Aorta (tissue), 5 donors: ENCODE measurements at regions of chr12 and their contacts with region 1.

Region 1: GRCh38 chr12:56189176-56189917 is at the start of gene SMARCC2:
- DNase-seq: peak; percentile 94 to 96
- ATAC-seq: peak; percentile 94
- H3K4me3 ChIP-seq: peak within 1 kb of the TSS; percentile 54 to 94
- H3K27ac ChIP-seq: peak within 1 kb of the TSS; percentile 62 to 99
- H3K4me1 ChIP-seq: no peaks in the 10 kb centered on the region
- H3K27me3 ChIP-seq: no peaks in the 10 kb centered on the region
- total RNA-seq, gene SMARCC2: 118 to 140 TPM

Region 2: DNA sequence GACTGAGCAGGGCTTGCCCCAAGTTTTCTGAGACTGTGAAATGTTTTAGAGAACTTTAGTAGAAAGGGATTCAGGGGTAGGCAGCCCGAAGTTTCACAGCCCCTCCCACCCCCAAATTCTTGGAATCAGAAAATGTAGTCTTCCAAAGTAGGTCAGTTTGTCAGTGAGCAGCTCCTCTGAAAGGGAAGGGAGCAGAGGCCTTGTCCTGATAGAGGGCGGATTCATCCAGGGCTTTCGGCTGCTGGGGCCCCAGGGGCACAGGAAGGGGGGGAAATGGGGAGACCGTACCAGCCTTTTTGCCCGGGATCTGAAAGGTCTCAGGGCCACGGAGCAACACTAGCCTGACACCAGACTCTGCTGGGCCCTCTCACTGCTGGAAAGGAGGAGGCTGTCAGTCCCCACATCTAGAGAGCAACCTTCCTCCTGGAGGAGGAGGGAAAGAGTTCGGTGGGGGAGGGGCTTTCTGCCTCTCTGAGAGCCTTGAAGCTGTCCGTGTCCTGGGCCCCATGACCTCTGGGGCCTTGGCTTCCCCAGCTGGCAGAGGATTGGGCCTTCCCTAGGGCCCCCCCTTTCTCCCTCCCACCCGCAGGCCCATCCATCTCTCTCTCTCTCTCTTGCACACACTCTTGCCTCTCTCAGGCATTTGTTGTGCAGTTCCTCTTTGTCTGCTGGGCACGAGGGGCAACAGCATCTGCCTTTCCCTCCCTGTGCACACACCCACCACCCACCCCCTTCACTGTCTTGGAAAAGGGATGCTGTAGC is 168.7 kb before region 1 on chr12 and contains the start of gene IKZF4:
- intact Hi-C with region 1: no loop called
- DNase-seq: peak in 1 of 2 donors; percentile 72
- ATAC-seq: peak; percentile 73
- H3K4me3 ChIP-seq: no peak within 1 kb of the TSS
- H3K27ac ChIP-seq: no peak within 1 kb of the TSS
- H3K4me1 ChIP-seq: no peaks in the 10 kb centered on the region
- H3K27me3 ChIP-seq: no peaks in the 10 kb centered on the region
- total RNA-seq, gene IKZF4: 9.8 to 12.2 TPM

Region 3: GRCh38 chr12:56117778-56118687 is 71.3 kb before region 1 on chr12 and contains the start of gene ZC3H10:
- intact Hi-C with region 1: loop called (anchors 1 to 2 kb)
- DNase-seq: peak; percentile 98 to 99
- ATAC-seq: peak; percentile 92
- H3K4me3 ChIP-seq: peak within 1 kb of the TSS; percentile 93 to 99
- H3K27ac ChIP-seq: peak within 1 kb of the TSS; percentile 91 to 98
- H3K4me1 ChIP-seq: peaks cover 0 to 6% of the 10 kb centered on the region in 2 donors
- H3K27me3 ChIP-seq: peaks cover 0 to 3% of the 10 kb centered on the region in 2 donors
- total RNA-seq, gene ZC3H10: 8.9 to 9.6 TPM

Region 4: GRCh38 chr12:56158029-56158925 is 31.1 kb before region 1 on chr12 and contains the start of gene MYL6:
- intact Hi-C with region 1: loop called in 1 of 2 experiments (anchors 2 kb)
- DNase-seq: peak; percentile 95 to 97
- ATAC-seq: peak; percentile 95
- H3K4me3 ChIP-seq: peak within 1 kb of the TSS; percentile 78 to 96
- H3K27ac ChIP-seq: peak within 1 kb of the TSS; percentile 62 to 82
- H3K4me1 ChIP-seq: no peaks in the 10 kb centered on the region
- H3K27me3 ChIP-seq: no peaks in the 10 kb centered on the region
- total RNA-seq, gene MYL6: 1,811 to 3,292 TPM

Region 5: DNA sequence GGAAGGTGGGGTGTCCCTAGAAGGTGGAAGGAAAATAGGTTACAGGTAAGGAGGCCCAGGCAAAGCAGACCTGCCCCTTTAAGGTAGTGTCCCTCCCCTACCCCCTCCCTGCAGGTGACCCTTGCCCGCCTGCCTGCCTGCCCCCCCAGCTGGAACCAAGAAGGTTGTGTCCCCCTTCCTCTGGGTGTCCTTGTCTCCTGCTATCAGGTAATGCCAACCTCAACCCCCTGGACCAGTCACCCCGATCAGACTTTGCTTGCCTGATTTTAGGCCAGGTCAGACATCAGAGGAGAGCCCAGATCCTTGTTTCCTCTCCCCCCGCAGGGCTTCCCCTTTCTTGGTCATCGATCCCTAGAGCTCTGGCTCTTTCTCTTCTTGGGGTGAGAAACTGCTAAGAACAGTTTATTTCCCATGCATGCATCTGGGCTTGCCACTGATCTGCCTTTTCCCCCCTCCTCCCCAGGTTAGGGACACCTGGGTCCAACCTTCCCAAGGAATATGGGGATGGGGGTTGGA is 40.6 kb after region 1 on chr12 and contains the start of gene SLC39A5:
- intact Hi-C with region 1: loop called in 1 of 2 experiments (anchors 5 kb)
- DNase-seq: no peak
- ATAC-seq: no peak
- H3K4me3 ChIP-seq: no peak within 1 kb of the TSS
- H3K27ac ChIP-seq: no peak within 1 kb of the TSS
- H3K4me1 ChIP-seq: no peaks in the 10 kb centered on the region
- H3K27me3 ChIP-seq: no peaks in the 10 kb centered on the region
- total RNA-seq, gene SLC39A5: not detected

Region 6: DNA sequence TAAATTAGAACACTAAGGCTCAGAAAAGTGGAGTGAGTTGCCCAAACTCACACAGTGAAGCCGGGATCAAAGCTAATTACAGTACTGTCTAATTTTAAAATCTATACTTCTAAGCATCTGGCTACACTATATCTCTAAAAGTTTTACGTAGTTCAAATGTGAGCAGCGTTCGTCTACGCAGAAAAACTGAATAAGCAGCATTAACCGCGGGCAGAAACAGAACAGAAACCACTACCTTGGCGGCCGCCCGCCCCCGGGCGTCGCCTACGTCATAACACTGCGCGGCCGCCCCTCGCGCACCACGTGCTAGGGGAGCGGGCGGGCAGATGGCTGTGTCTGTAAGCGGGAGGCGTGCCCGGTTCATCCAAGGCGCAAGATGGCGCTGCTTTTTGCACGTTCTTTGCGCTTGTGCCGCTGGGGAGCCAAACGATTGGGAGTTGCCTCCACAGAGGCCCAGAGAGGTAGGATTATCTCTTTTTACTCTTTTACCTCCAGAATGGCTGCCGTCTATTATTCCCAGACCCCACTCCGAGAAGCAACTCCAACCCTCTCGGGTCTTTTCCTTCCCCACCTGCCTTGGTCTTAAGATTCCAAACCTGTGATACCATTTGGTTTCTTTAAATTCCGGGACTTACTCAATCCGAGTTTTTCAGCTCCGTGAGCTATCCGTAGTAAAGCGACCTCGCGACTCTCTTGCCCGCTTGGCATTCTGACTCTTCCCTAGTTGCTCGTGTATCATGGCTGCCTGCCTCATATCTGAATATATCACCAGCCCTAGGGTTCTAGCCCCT is 279.1 kb after region 1 on chr12 and contains the start of gene SPRYD4:
- intact Hi-C with region 1: loop called in 1 of 2 experiments (anchors 2 kb)
- DNase-seq: peak; percentile 95 to 97
- ATAC-seq: peak; percentile 98
- H3K4me3 ChIP-seq: peak within 1 kb of the TSS; percentile 66 to 91
- H3K27ac ChIP-seq: peak within 1 kb of the TSS; percentile 28 to 62
- H3K4me1 ChIP-seq: no peaks in the 10 kb centered on the region
- H3K27me3 ChIP-seq: no peaks in the 10 kb centered on the region
- total RNA-seq, gene SPRYD4: 2.1 to 3.6 TPM

Region 7: GRCh38 chr12:56571126-56571525 is 381.8 kb after region 1 on chr12:
- intact Hi-C with region 1: no loop called
- DNase-seq: no peak
- ATAC-seq: no peak
- H3K4me3 ChIP-seq: no peak overlapping the region
- H3K27ac ChIP-seq: no peak overlapping the region
- H3K4me1 ChIP-seq: no peaks in the 10 kb centered on the region
- H3K27me3 ChIP-seq: no peaks in the 10 kb centered on the region